Activated naive CD4-positive, alpha-beta T cell treated with anti-CD3 and anti-CD28 coated beads, Interleukin-2, amount 10 ng/mL, durations not matched to agents 7 days and 5 days (primary cell): ENCODE measurements at regions of chr16 and their contacts with region 1.

Region 1: DNA sequence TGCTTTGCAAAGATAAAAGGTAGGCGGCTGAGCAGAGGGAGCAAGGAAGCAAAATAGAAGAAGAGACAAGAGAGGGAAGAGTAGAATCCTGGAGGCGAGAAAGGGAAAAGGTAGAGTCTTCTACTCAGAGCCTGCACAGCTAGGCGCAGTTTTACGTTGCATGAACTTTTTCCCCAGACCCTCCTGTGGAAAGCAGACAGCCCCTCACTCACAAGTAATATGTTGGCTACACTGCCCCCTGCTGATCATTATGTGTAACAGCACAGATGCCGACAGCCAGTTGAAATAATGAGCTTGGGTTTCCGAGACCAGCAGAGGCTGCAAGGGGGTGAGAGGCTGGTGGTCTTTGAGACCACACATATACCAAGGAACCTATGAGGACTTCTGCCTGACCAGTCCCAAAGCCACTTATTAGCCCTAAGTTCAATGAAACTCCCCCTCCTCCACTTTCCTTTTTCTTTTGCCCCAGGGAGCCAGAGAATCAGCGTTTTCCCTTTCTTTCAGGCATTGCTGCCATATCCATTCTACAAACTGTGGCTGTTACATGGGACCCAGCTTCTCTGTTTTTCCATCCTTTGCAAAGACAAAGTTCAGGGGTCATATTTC is 22.5 kb upstream of the CMTR2 start:
- DNase-seq: peak; percentile 43
- H3K4me3 Mint-ChIP-seq: no peak overlapping the region
- H3K27ac Mint-ChIP-seq: no peak overlapping the region
- H3K4me1 Mint-ChIP-seq: no peaks in the 10 kb centered on the region
- H3K27me3 Mint-ChIP-seq: peaks cover 3% of the 10 kb centered on the region

Region 2: DNA sequence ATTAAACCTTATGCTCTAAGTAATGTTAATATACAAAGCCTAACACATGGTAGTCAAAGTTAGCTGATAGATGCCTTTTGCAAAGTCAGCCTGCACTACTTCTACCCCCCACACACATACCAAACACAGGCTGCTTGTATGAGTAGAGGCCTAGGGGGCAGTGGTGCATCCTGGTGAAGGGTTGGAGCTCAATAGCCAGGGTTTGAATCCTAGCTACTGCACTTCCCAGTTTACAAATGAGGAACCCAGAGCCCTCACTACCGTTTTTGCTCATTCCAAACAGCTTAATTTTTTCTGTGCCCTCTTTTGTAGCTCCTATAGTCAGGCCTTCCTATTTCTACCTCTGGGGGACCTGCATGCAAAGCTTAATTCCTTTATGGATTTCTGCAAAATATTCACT is 62.3 kb before region 1 on chr16:
- CTCF ChIA-PET with region 1: interaction called, 15 read pairs
- DNase-seq: no peak
- H3K4me3 Mint-ChIP-seq: no peak overlapping the region
- H3K27ac Mint-ChIP-seq: no peak overlapping the region
- H3K4me1 Mint-ChIP-seq: no peaks in the 10 kb centered on the region
- H3K27me3 Mint-ChIP-seq: no peaks in the 10 kb centered on the region

Region 3: GRCh38 chr16:71288890-71289733 is 22.5 kb before region 1 on chr16 and contains the start of gene CMTR2:
- CTCF ChIA-PET with region 1: interaction called, 11 read pairs
- DNase-seq: peak; percentile 94
- H3K4me3 Mint-ChIP-seq: peak within 1 kb of the TSS; percentile 82
- H3K27ac Mint-ChIP-seq: peak within 1 kb of the TSS; percentile 89
- H3K4me1 Mint-ChIP-seq: peaks cover 21% of the 10 kb centered on the region
- H3K27me3 Mint-ChIP-seq: peaks cover 13% of the 10 kb centered on the region